Dendritic cell treated with granulocyte-macrophage colony-stimulating factor and Interleukin-4, amounts not matched to agents 40 ng/mL and 50 ng/mL, for 4 days (primary cell): ENCODE measurements at regions of chr10 and their contacts with region 1.

Region 1: DNA sequence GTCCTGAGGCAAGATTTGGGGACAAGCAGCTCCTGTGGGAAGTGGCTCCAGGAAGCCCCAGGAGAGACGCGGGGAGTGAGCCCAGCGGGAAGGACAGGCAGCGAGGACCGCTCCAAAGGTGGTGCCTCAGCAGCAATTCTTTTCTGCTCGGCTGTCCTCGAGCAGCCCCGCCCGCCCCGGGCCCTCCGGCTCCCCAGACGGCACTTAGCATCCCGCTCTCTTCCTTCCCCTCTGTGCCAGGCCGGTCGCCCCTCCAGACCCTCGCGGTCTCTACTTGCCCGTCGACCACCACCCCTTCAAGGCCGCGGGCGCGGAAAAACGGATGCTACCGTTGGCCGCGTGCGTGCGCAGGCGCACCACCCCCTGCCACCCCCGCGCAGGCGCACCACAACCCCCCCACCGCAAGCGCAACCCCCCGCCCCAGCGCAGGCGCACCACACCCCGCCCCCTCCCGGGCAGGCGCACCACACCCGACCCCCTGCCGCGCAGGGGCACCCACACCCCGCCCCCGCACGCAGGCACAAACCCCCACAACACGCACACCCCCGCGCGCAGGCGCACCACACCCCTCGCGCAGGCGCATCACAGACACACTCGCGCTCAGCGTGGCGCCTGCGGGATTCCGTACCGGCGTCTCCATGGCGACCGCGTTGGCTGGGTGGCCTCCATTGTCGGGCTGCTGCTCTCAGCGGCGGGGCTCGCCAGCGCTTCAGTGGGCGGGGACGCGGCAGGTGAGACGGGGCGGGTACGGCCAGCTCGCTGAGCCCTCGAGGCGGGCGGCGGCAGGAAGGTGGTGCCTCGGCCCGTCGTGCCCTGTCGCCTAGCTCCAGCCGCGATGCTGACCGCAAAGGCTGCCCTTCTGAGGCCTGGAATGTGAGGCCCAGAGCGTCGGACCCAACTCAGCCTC is at the start of gene LRRC27:
- H3K4me3 Mint-ChIP-seq: peak within 1 kb of the TSS; percentile 95
- H3K27ac Mint-ChIP-seq: peak within 1 kb of the TSS; percentile 98
- H3K4me1 Mint-ChIP-seq: peaks cover 70% of the 10 kb centered on the region
- H3K27me3 Mint-ChIP-seq: no peaks in the 10 kb centered on the region

Region 2: GRCh38 chr10:132229834-132230556 is 101.8 kb before region 1 on chr10:
- intact Hi-C with region 1: loop called (anchors 2 kb)
- H3K4me3 Mint-ChIP-seq: peak overlapping the region; percentile 60
- H3K27ac Mint-ChIP-seq: no peak overlapping the region
- H3K4me1 Mint-ChIP-seq: no peaks in the 10 kb centered on the region
- H3K27me3 Mint-ChIP-seq: no peaks in the 10 kb centered on the region

Region 3: GRCh38 chr10:132307823-132308587 is 23.8 kb before region 1 on chr10 and contains the start of gene STK32C:
- intact Hi-C with region 1: loop called (anchors 1 kb)
- H3K4me3 Mint-ChIP-seq: peak within 1 kb of the TSS; percentile 93
- H3K27ac Mint-ChIP-seq: peak within 1 kb of the TSS; percentile 78
- H3K4me1 Mint-ChIP-seq: peaks cover 69% of the 10 kb centered on the region
- H3K27me3 Mint-ChIP-seq: peaks cover 33% of the 10 kb centered on the region

Region 4: DNA sequence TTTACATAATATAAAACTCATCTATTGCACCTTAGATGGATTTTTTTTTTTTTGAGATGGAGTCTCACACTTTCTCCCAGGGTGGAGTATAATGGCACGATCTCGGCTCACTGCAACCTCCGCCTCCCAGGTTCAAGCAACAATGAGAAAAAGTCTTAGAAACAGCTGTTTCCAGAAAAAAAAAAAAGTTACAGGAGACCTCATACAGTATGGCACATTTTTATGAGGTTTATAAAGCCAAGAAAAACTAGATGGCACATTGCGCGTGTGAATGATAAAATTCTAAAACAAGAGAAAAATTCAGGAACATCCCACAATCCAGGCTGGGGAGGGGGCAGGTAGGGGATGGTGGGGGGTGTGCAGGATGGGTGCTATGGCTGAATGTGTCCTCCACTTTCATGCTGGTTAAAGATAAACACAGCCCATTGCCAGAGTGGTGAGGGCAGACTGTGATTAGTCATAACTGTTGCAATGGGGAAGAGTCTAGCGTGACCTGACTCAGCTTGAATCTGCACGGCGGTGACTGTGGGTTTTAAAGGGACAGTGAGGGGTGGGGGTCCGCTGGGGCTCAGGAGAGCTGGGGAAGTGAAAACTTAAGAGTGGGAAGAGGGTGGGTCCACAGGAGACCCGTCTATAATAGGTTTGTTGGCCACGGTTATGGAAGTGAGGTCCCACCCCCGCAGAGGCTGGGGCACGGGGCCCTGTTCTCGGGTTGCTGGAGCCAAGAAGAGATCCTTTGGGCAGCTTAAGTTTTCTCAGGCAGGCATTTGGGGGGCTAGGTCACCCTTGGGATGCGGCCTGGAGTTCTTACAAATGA is 11.7 kb before region 1 on chr10:
- intact Hi-C with region 1: loop called (anchors 1 kb)
- H3K4me3 Mint-ChIP-seq: peak overlapping the region; percentile 39
- H3K27ac Mint-ChIP-seq: peak overlapping the region; percentile 94
- H3K4me1 Mint-ChIP-seq: peaks cover 82% of the 10 kb centered on the region
- H3K27me3 Mint-ChIP-seq: no peaks in the 10 kb centered on the region

Region 5: DNA sequence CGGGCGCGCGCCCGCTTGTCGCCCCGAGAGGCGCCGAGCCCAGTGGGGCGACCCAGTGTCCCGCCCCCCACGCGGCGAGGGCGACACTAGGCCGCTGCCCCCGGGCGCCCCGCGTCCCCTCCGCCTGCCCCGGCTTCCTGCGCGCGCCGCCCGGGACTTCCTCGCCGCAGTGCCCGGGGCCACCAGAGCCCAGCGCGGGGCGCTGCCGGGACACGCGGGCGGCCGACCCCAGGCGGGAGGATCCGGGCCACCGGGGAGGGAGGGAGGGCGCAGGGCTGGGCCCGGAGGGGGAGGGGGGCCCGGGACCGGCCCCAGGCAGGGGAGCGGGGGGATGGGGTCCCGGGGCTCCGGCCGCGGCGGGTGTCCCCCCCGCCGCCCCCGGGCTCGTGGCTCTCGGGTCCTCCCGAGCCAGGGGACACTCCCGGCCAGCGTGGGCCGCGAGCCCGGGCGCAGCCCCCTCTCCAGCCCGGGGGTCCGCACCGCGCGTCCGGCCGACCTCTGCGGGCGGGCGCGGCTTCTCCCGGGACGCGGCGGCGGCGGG is 64.8 kb after region 1 on chr10:
- intact Hi-C with region 1: loop called (anchors 5 kb)
- H3K4me3 Mint-ChIP-seq: peak overlapping the region; percentile 33
- H3K27ac Mint-ChIP-seq: peak overlapping the region; percentile 82
- H3K4me1 Mint-ChIP-seq: peaks cover 69% of the 10 kb centered on the region
- H3K27me3 Mint-ChIP-seq: peaks cover 7% of the 10 kb centered on the region

Region 6: GRCh38 chr10:132452631-132453469 is 121.1 kb after region 1 on chr10:
- intact Hi-C with region 1: loop called (anchors 5 kb)
- H3K4me3 Mint-ChIP-seq: peak overlapping the region; percentile 42
- H3K27ac Mint-ChIP-seq: peak overlapping the region; percentile 56
- H3K4me1 Mint-ChIP-seq: peaks cover 41% of the 10 kb centered on the region
- H3K27me3 Mint-ChIP-seq: peaks cover 14% of the 10 kb centered on the region